A549 (cell line): ENCODE measurements at regions of chr20 and their contacts with region 1.

Region 1: GRCh38 chr20:31822421-31823330 is 3.5 kb downstream of the MYLK2 start:
- DNase-seq: peak; percentile 62 to 79
- ATAC-seq: peak; percentile 71 to 90
- H3K4me3 ChIP-seq: 0 out of 3 replicates have a peak overlapping the region, but pooled peaks have one; percentile 18
- H3K27ac ChIP-seq: peak overlapping the region; percentile 16 to 68; a peak in 4 of 6 replicates
- H3K4me1 ChIP-seq: peaks cover 23% of the 10 kb centered on the region; the same call in 2 of the 3 replicates
- CTCF ChIP-seq: peak; percentile 97
- EP300 ChIP-seq: no peak
- POLR2A ChIP-seq: no peak
- RAD21 ChIP-seq: peak; percentile 97 to 99

Region 2: DNA sequence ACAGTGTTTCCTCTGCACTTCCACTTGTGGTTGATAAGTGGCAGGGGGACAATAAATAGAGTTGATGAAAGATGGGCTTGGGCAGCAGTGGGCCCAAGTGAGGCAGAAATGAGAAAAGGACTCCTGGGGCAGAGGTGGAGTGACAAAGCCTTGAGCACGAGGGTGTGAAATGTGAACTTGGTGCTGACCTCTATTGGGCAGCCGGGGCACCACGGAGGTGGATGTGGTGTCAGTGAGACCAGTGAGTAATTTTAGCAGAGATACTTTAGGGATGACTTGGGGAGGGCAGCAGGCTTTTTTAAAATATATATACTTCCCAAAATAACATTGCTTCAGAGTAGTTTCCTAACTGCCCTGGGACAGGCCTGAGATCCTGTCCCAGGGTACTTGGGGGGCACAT is 34.1 kb before region 1 on chr20:
- CTCF ChIA-PET with region 1: interaction called, 10 read pairs
- POLR2A ChIA-PET with region 1: no interaction called
- DNase-seq: peak; percentile 20 to 21
- ATAC-seq: peak; percentile 74 to 84; a peak in 5 of 6 replicates
- H3K4me3 ChIP-seq: no peak overlapping the region
- H3K27ac ChIP-seq: no peak overlapping the region
- H3K4me1 ChIP-seq: no peaks in the 10 kb centered on the region
- CTCF ChIP-seq: 0 out of 3 replicates have a peak, but pooled peaks have one; percentile 10
- EP300 ChIP-seq: no peak
- POLR2A ChIP-seq: no peak
- RAD21 ChIP-seq: no peak; a peak in 1 of 5 replicates

Region 3: GRCh38 chr20:31835977-31836852 is 13.5 kb after region 1 on chr20:
- CTCF ChIA-PET with region 1: interaction called, 133 read pairs
- POLR2A ChIA-PET with region 1: no interaction called
- DNase-seq: peak; percentile 56 to 72
- ATAC-seq: peak; percentile 55 to 63
- H3K4me3 ChIP-seq: no peak overlapping the region
- H3K27ac ChIP-seq: peak overlapping the region; percentile 84 to 86
- H3K4me1 ChIP-seq: peaks cover 69% of the 10 kb centered on the region
- CTCF ChIP-seq: no peak
- EP300 ChIP-seq: peak; percentile 17 to 47; a peak in 2 of 5 replicates
- POLR2A ChIP-seq: no peak
- RAD21 ChIP-seq: no peak

Region 4: GRCh38 chr20:31856516-31856915 is 33.8 kb after region 1 on chr20:
- CTCF ChIA-PET with region 1: interaction called, 80 read pairs
- POLR2A ChIA-PET with region 1: no interaction called
- DNase-seq: no peak
- ATAC-seq: no peak
- H3K4me3 ChIP-seq: no peak overlapping the region
- H3K27ac ChIP-seq: no peak overlapping the region
- H3K4me1 ChIP-seq: peaks cover 13% of the 10 kb centered on the region
- CTCF ChIP-seq: no peak
- EP300 ChIP-seq: no peak
- POLR2A ChIP-seq: no peak
- RAD21 ChIP-seq: no peak

Region 5: DNA sequence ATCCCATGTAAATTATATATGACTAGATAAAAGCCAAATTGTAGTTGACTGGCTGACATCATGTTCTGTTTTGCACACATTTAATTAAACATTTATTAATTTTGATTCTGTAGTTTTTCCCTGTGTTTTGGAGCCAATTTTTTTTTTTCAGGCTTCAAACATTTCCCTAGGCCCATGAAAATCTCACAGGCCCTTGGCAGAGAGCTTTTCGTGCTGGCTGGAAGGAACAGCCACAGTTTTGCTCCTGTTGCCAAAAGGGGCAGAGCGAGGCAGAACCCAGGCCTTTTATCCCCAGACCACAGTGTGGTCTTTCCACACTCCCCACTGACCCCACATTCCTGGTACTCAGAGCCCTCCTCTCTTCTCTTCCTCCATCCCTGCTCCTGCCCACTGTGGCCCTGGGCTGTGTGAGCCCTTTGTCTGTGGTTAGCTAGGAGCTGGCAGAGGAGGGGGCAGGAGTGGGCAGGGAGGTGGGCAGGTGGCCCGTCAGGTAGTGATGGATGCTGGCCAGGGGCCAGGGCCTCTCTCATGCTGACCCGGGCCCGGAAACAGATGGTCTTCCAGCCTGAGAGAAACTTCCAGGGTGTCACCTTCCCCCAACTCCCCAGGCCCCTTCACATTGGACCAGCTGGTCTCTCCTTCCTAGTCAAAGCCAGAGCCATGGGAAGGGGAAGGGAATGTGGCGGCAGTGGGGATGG is 168.1 kb after region 1 on chr20:
- CTCF ChIA-PET with region 1: interaction called, 11 read pairs
- POLR2A ChIA-PET with region 1: no interaction called
- DNase-seq: no peak
- ATAC-seq: no peak
- H3K4me3 ChIP-seq: no peak overlapping the region
- H3K27ac ChIP-seq: no peak overlapping the region
- H3K4me1 ChIP-seq: peaks cover 22% of the 10 kb centered on the region
- CTCF ChIP-seq: no peak
- EP300 ChIP-seq: no peak
- POLR2A ChIP-seq: no peak
- RAD21 ChIP-seq: no peak

Region 6: DNA sequence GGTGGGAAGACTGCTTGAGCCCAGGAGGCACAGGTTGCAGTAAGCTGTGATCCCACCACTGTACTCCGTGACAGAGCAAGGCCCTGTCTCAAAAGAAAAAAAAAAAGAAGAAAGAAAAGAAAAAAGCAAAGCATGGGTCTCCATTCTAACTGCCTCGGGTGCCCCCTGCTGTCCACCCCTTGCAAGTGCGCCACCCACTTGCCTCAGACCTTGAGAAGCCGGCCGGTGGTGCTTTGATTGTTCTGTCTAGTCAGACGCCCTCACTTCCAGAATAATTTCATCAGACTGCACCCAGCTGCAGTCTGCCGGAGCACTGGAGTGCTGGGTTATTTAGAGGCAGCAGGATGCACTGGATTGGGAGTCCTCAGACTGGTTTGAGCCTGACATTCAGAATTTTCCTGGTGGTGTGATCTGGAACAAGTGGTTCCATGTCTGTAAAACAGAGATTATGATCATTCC is 269.2 kb after region 1 on chr20:
- CTCF ChIA-PET with region 1: interaction called, 44 read pairs
- POLR2A ChIA-PET with region 1: no interaction called
- DNase-seq: peak; percentile 63 to 77
- ATAC-seq: peak; percentile 70 to 94
- H3K4me3 ChIP-seq: no peak overlapping the region
- H3K27ac ChIP-seq: 0 out of 6 replicates have a peak overlapping the region, but pooled peaks of 1 of the 2 experiments have one; percentile 20
- H3K4me1 ChIP-seq: no peaks in the 10 kb centered on the region
- CTCF ChIP-seq: peak; percentile 83
- EP300 ChIP-seq: no peak
- POLR2A ChIP-seq: no peak
- RAD21 ChIP-seq: peak; percentile 70 to 71